Activated CD4-positive, alpha-beta T cell treated with anti-CD3 and anti-CD28 coated beads, Interleukin-2, amount 10 ng/mL, durations not matched to agents 24 days and 14 days (primary cell): ENCODE measurements at regions of chr9 and their contacts with region 1.

Region 1: DNA sequence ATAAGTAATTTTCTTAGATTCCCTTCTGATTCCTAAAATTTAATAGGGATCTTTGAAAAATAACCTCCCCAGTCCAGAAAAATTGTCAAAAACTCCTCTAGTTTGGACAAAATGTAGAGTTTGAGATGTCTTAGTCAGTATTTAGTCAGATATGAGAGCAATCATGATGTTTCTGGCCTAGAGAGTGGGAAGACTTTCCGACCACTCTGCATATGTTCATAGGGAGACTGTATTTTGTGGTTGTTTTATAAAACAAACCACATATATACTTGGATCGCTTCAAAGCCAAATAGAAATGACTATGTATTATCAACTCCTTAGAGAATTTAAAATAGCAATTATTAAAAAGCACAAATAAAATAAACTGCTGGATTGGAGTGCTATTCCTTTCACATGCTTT is 15.8 kb downstream of the ZFAND5 start:
- DNase-seq: no peak
- H3K4me3 Mint-ChIP-seq: no peak overlapping the region
- H3K27ac Mint-ChIP-seq: no peak overlapping the region
- H3K4me1 Mint-ChIP-seq: peaks cover 22% of the 10 kb centered on the region
- H3K27me3 Mint-ChIP-seq: no peaks in the 10 kb centered on the region

Region 2: DNA sequence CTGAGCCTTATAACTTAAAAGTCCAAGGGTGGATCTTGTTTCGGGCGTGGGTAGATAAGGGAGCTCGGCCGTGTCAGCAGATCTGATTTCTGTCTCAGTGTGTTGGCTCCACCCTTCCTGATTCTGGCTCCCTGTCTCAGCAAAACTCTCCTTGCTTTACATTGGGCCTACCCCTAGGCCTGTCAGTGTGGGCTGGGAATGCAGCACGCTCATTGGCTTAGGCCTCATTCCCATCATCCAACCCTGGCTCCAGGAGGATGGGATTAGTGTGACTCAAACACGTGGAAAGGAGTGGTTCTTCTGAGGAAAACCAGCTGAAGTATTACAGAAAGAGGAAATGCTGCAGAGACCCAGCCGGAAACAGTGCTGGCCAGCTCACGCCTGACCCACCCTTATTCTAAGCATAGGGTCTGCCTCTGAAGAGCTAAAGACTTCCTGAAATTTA is 44.1 kb before region 1 on chr9:
- intact Hi-C with region 1: loop called (anchors 5 kb)
- DNase-seq: peak; percentile 64
- H3K4me3 Mint-ChIP-seq: peak overlapping the region; percentile 17
- H3K27ac Mint-ChIP-seq: peak overlapping the region; percentile 42
- H3K4me1 Mint-ChIP-seq: peaks cover 30% of the 10 kb centered on the region
- H3K27me3 Mint-ChIP-seq: peaks cover 5% of the 10 kb centered on the region

Region 3: GRCh38 chr9:72649127-72649442 is 299.8 kb after region 1 on chr9:
- intact Hi-C with region 1: no loop called
- DNase-seq: no peak
- H3K4me3 Mint-ChIP-seq: no peak overlapping the region
- H3K27ac Mint-ChIP-seq: no peak overlapping the region
- H3K4me1 Mint-ChIP-seq: no peaks in the 10 kb centered on the region
- H3K27me3 Mint-ChIP-seq: peaks cover 22% of the 10 kb centered on the region